Natural killer cell (primary cell): ENCODE measurements at regions of chr18 and their contacts with region 1.

Region 1: DNA sequence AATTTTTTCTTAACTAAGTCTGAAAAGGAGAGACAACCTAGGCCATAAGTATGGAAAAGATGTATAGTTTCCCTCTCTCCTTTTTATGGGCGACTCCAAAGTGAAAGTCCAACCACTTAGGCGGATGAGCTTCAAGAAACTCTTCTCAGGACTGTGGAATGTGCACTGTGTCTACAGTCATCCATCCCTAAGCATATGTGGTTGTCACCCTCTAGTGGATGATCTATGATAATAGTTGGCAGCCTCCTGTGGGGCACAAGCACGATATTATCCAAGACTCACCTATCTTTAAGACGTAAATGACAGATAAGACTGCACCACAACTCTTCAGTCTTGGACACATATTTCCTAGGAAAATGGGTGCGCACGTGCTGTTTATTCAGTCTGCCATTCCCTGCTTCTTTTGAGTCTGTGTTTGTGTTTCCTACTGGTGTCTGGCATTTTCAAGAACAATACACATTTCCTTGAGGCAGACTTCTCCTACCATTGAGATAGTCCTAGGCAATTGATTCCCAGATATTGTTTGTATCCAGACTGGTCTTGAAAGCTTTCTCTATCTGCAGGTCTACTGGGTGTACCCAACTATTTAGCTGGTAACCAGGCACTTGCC is 145.5 kb upstream of the CTAGE1 start:
- DNase-seq: peak in 1 of 2 donors; percentile 70
- ATAC-seq: peak; percentile 68 to 83 (median 81)
- H3K4me3 ChIP-seq: no peak overlapping the region
- H3K4me3 Mint-ChIP-seq: no peak overlapping the region
- H3K27ac ChIP-seq: no peak overlapping the region
- H3K27ac Mint-ChIP-seq: no peak overlapping the region
- H3K4me1 ChIP-seq: peaks cover 15% of the 10 kb centered on the region
- H3K4me1 Mint-ChIP-seq: peaks cover 11 to 20% of the 10 kb centered on the region in 2 donors
- H3K27me3 ChIP-seq: peaks cover 35% of the 10 kb centered on the region
- H3K27me3 Mint-ChIP-seq: peaks cover 27 to 70% of the 10 kb centered on the region in 2 donors
- CTCF ChIP-seq: peak; percentile 89

Region 2: DNA sequence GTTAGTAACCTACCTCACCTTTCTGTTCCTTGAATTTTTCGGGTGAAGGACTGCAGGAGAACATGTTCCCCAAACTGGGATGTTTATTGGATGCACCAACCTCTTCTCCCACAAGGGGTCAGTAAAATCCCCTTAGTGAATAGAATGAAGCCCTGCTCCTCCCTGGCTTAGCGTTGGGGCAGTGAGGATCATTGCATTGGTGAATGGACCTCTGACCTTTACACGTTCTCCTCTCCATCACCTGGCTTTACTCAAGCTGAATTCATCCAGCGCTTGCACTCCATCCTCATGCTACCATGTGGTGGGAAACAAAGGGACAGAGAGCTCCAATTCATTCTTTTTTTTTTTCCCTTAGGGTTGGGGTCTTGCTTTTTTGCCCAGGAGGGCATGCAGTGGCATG is 665.4 kb before region 1 on chr18:
- intact Hi-C with region 1: loop called (anchors 5 kb)
- DNase-seq: peak in 1 of 2 donors; percentile 39
- ATAC-seq: peak in 2 of 3 donors; percentile 53 to 65
- H3K4me3 ChIP-seq: no peak overlapping the region
- H3K4me3 Mint-ChIP-seq: no peak overlapping the region
- H3K27ac ChIP-seq: no peak overlapping the region
- H3K27ac Mint-ChIP-seq: no peak overlapping the region
- H3K4me1 ChIP-seq: no peaks in the 10 kb centered on the region
- H3K4me1 Mint-ChIP-seq: peaks cover 6 to 7% of the 10 kb centered on the region in 2 donors
- H3K27me3 ChIP-seq: no peaks in the 10 kb centered on the region
- H3K27me3 Mint-ChIP-seq: peaks cover 8 to 12% of the 10 kb centered on the region in 2 donors
- CTCF ChIP-seq: peak; percentile 56

Region 3: DNA sequence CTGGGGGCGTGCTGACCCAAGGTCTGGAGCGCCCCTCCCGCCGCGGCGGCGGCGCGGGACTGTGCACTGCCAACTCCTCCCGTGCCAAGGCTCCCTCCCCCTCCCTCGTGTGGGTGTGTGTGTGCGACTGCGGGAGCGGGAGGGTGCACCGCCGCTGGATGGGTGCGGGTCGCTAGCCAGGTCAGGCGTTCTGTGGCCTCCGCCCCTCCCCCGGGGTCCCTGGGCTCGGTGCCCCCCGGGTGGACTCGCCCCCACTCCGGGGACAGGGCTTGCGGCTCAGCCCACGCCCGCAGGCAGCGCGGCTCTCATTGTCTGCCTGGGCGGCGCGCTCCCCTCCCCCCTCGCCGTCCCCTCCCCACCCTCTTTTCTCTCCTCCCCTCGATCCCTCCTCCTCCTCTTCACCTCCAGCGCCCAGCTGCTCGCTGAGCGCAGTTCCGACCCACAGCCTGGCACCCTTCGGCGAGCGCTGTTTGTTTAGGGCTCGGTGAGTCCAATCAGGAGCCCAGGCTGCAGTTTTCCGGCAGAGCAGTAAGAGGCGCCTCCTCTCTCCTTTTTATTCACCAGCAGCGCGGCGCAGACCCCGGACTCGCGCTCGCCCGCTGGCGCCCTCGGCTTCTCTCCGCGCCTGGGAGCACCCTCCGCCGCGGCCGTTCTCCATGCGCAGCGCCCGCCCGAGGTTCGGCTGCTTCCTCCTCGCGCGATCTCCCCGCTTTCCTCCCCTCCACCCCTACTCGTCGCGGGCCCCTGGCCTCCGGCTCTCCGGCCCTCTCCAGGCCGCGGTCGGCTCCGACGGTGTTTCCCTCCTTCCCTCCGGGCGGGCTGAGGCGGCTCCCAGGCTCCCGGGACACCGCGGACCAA is 394.0 kb before region 1 on chr18 and contains the start of gene GATA6:
- intact Hi-C with region 1: loop called (anchors 1 kb)
- DNase-seq: peak in 1 of 2 donors; percentile 73
- ATAC-seq: peak; percentile 55 to 72 (median 71)
- H3K4me3 ChIP-seq: peak within 1 kb of the TSS; percentile 55
- H3K4me3 Mint-ChIP-seq: peak within 1 kb of the TSS; percentile 95
- H3K27ac ChIP-seq: no peak within 1 kb of the TSS
- H3K27ac Mint-ChIP-seq: peak within 1 kb of the TSS in 1 of 2 donors; percentile 84
- H3K4me1 ChIP-seq: peaks cover 58% of the 10 kb centered on the region
- H3K4me1 Mint-ChIP-seq: peaks cover 19 to 47% of the 10 kb centered on the region in 2 donors
- H3K27me3 ChIP-seq: peaks cover 64% of the 10 kb centered on the region
- H3K27me3 Mint-ChIP-seq: peaks cover 65 to 67% of the 10 kb centered on the region in 2 donors
- CTCF ChIP-seq: peak; percentile 38
- total RNA-seq, gene GATA6: 0.54 to 1.1 (median 1.0) TPM

Region 4: DNA sequence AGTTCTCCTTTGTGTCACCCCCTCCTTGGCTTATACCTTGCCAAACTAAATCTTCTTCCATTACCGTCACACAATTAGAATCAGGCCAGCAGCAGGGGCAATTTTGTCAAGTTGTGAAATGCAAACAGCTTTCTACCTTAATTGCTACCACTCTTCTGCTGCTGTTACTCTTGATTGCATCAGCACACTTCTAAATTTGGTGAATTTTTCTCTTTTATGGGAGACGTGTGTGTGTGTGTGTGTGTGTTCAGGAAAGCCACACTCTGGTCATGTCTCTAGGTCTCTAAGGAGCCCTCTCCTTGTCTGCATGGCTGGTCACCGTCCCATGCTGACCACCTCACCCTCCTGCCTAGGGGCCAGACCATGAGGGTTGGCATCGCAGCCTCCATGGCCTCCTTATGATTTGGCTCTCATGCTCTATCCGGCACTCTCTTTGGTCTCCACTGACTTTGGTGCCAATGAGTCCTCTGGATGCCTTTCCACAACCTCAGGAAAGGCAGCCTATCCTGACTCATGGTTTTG is 306.1 kb before region 1 on chr18:
- intact Hi-C with region 1: loop called (anchors 2 kb)
- DNase-seq: no peak
- ATAC-seq: no peak
- H3K4me3 ChIP-seq: no peak overlapping the region
- H3K4me3 Mint-ChIP-seq: no peak overlapping the region
- H3K27ac ChIP-seq: no peak overlapping the region
- H3K27ac Mint-ChIP-seq: peak overlapping the region in 1 of 2 donors; percentile 48
- H3K4me1 ChIP-seq: peaks cover 33% of the 10 kb centered on the region
- H3K4me1 Mint-ChIP-seq: peaks cover 45 to 57% of the 10 kb centered on the region in 2 donors
- H3K27me3 ChIP-seq: no peaks in the 10 kb centered on the region
- H3K27me3 Mint-ChIP-seq: peaks cover 28 to 34% of the 10 kb centered on the region in 2 donors
- CTCF ChIP-seq: no peak

Region 5: DNA sequence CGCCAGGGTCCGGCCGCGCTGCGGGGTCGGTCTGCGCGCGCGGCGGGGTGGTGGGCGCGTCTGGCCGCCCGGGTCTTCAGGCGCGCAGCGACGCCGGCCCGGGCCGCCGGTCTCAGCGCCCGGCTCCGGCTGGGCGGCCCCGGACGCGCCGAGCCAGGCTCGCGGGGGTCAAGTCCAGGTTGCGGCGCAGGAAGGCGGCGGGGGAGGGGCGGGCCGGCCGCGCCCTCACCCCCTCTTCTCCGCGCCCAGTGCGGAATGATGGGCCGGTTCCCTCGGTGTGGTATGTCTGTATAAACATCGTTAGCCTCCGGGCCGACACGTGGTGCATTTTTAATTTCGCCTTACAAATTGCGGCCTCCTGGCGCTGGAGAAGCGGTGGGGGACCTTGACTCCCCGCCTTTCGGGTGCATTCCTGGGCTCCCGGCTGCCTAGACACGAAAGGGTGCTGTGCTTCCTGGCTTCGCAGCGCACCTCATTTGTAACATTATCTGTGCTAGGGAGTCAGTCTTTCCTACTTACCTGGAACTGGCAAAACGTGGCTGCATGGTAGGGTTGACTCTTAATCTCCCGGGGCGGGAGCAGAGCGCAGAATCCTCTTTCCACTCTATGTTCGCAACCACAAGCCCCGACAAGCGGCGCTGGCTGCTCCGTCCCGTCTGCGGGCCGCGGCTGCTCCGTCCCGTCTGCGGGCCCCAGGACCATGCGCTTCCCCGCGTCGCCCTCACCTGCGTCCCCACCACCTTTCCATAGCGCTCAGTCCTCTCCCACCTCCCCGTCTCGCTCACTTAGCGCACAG is 214.5 kb before region 1 on chr18:
- intact Hi-C with region 1: loop called (anchors 5 kb)
- DNase-seq: peak; percentile 34 to 43
- ATAC-seq: peak in 1 of 3 donors; percentile 3
- H3K4me3 ChIP-seq: peak overlapping the region; percentile 79
- H3K4me3 Mint-ChIP-seq: peak overlapping the region; percentile 92
- H3K27ac ChIP-seq: peak overlapping the region; percentile 94
- H3K27ac Mint-ChIP-seq: peak overlapping the region; percentile 92 to 97
- H3K4me1 ChIP-seq: peaks cover 44% of the 10 kb centered on the region
- H3K4me1 Mint-ChIP-seq: peaks cover 65% of the 10 kb centered on the region in 2 donors
- H3K27me3 ChIP-seq: no peaks in the 10 kb centered on the region
- H3K27me3 Mint-ChIP-seq: no peaks in the 10 kb centered on the region
- CTCF ChIP-seq: no peak

Region 6: DNA sequence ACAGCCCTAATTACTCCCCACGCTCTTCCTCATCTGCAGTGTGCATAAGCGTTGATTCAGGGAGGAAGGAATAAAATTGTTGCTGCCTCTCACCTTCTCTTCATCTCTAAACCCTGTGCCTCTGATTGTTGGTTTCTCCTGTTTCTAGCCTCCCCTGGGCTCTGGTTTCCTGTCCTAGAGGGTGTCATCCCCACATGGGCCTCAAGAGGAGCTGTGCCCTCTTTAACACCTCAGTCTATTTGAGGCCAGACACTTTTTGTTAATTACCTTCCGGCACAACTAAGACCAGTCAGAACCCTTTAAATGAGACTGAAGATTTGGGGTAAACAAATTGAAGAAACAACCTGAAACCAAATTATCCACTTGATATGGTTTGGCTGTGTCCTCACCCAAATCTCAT is 155.1 kb before region 1 on chr18:
- intact Hi-C with region 1: loop called (anchors 5 kb)
- DNase-seq: peak; percentile 33 to 48
- ATAC-seq: peak; percentile 89 to 96 (median 93)
- H3K4me3 ChIP-seq: no peak overlapping the region
- H3K4me3 Mint-ChIP-seq: peak overlapping the region; percentile 84
- H3K27ac ChIP-seq: peak overlapping the region; percentile 72
- H3K27ac Mint-ChIP-seq: peak overlapping the region; percentile 88 to 92
- H3K4me1 ChIP-seq: peaks cover 32% of the 10 kb centered on the region
- H3K4me1 Mint-ChIP-seq: peaks cover 49 to 52% of the 10 kb centered on the region in 2 donors
- H3K27me3 ChIP-seq: no peaks in the 10 kb centered on the region
- H3K27me3 Mint-ChIP-seq: peaks cover 0 to 2% of the 10 kb centered on the region in 2 donors
- CTCF ChIP-seq: peak; percentile 57